GM12878 (cell line): ENCODE measurements at regions of chr1 and their contacts with region 1.

Region 1: GRCh38 chr1:116737020-116737854 is 17.0 kb upstream of the CD2 start:
- DNase-seq: peak; percentile 66
- ATAC-seq: peak; percentile 62
- H3K4me3 ChIP-seq: no peak overlapping the region
- H3K27ac ChIP-seq: peak overlapping the region; percentile 97
- H3K4me1 ChIP-seq: peaks cover 39% of the 10 kb centered on the region
- H3K27me3 ChIP-seq: no peaks in the 10 kb centered on the region
- CTCF ChIP-seq: peak; percentile 88 to 95 (median 93); a peak in 5 of 6 replicates
- EP300 ChIP-seq: no peak
- POLR2A ChIP-seq: peak; percentile 51; the same call in 1 of the 2 replicates
- RAD21 ChIP-seq: peak; percentile 95

Region 2: DNA sequence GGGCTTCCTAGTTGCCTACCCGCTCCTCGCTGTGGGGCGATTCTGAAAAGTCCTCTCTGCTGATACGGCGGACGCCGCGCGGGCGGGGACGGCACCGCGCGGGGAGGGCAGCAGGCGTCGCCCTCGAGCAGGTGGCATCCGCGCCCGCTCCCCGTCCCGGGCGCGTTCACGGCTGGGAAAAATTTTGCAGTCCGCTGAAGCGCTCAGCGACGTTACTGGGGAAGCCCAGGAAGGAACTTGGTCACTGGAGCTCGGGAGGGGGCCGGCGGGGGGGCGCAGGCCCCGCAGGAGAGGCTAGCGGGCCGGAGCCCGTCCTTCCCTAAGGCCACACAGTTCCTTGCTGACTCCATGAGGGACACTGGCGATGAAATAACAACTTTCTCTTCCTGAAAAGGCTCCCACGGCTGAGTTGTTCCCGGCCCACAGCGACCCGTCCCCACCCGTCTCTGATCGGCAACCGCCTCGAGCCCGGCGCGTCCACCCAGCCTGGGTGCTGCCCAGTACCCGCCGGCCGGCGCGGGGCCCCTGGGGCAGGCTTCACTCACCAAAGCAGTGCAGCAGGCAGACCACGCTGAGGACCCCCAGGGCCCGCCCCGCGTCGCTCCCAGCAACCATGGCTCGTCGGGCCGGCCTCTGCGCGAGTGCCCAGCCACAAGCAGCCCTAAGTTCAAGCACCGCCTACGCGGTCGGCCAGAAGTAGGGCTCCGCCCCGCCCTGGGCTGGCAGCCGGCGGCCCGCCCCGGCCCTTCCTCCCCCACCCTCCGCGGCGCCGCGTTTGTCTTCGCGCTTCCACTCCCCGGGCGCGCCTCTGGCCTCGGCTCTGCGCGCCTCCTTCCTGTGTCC is 166.7 kb before region 1 on chr1 and contains the start of gene CD58:
- CTCF ChIA-PET with region 1: interaction called, 18 read pairs
- POLR2A ChIA-PET with region 1: interaction called, 3 read pairs
- RAD21 ChIA-PET with region 1: interaction called, 19 read pairs
- SMC1A ChIA-PET with region 1: interaction called, 25 read pairs
- in situ Hi-C with region 1: no loop called
- intact Hi-C with region 1: loop called (anchors 1 kb)
- DNase-seq: no peak
- ATAC-seq: peak; percentile 76
- H3K4me3 ChIP-seq: peak within 1 kb of the TSS; percentile 97
- H3K27ac ChIP-seq: peak within 1 kb of the TSS; percentile 95
- H3K4me1 ChIP-seq: peaks cover 40% of the 10 kb centered on the region
- H3K27me3 ChIP-seq: no peaks in the 10 kb centered on the region
- CTCF ChIP-seq: peak; percentile 69 to 72 (median 70)
- EP300 ChIP-seq: 0 out of 4 replicates have a peak, but pooled peaks have one; percentile 12 to 27
- POLR2A ChIP-seq: peak; percentile 93
- RAD21 ChIP-seq: peak; percentile 32; the same call in 1 of the 2 replicates
- polyA plus RNA-seq, gene CD58: 110 to 125 TPM

Region 3: GRCh38 chr1:116763787-116764465 is 26.7 kb after region 1 on chr1:
- CTCF ChIA-PET with region 1: interaction called, 120 read pairs
- POLR2A ChIA-PET with region 1: interaction called, 45 read pairs
- RAD21 ChIA-PET with region 1: interaction called, 176 read pairs
- SMC1A ChIA-PET with region 1: interaction called, 224 read pairs
- in situ Hi-C with region 1: no loop called
- intact Hi-C with region 1: loop called (anchors 1 kb)
- DNase-seq: no peak
- ATAC-seq: peak; percentile 22
- H3K4me3 ChIP-seq: no peak overlapping the region
- H3K27ac ChIP-seq: no peak overlapping the region
- H3K4me1 ChIP-seq: peaks cover 10% of the 10 kb centered on the region
- H3K27me3 ChIP-seq: no peaks in the 10 kb centered on the region; a peak in 1 of 4 replicates
- CTCF ChIP-seq: peak; percentile 25 to 41 (median 36); a peak in 5 of 6 replicates
- EP300 ChIP-seq: no peak
- POLR2A ChIP-seq: no peak
- RAD21 ChIP-seq: peak; percentile 44

Region 4: GRCh38 chr1:116806245-116806644 is 69.0 kb after region 1 on chr1:
- CTCF ChIA-PET with region 1: interaction called, 11 read pairs
- POLR2A ChIA-PET with region 1: interaction called, 3 read pairs
- RAD21 ChIA-PET with region 1: interaction called, 4 read pairs
- SMC1A ChIA-PET with region 1: interaction called, 17 read pairs
- in situ Hi-C with region 1: no loop called
- intact Hi-C with region 1: no loop called
- DNase-seq: peak; percentile 76
- ATAC-seq: peak; percentile 81
- H3K4me3 ChIP-seq: no peak overlapping the region
- H3K27ac ChIP-seq: no peak overlapping the region
- H3K4me1 ChIP-seq: peaks cover 5% of the 10 kb centered on the region
- H3K27me3 ChIP-seq: no peaks in the 10 kb centered on the region
- CTCF ChIP-seq: no peak
- EP300 ChIP-seq: no peak
- POLR2A ChIP-seq: no peak
- RAD21 ChIP-seq: no peak

Region 5: GRCh38 chr1:116842654-116843053 is 105.4 kb after region 1 on chr1:
- CTCF ChIA-PET with region 1: interaction called, 19 read pairs
- POLR2A ChIA-PET with region 1: interaction called, 8 read pairs
- RAD21 ChIA-PET with region 1: interaction called, 29 read pairs
- SMC1A ChIA-PET with region 1: interaction called, 21 read pairs
- in situ Hi-C with region 1: no loop called
- intact Hi-C with region 1: no loop called
- DNase-seq: no peak
- ATAC-seq: no peak; the same call in 2 of the 3 replicates
- H3K4me3 ChIP-seq: no peak overlapping the region
- H3K27ac ChIP-seq: no peak overlapping the region
- H3K4me1 ChIP-seq: peaks cover 2% of the 10 kb centered on the region; the same call in 1 of the 2 replicates
- H3K27me3 ChIP-seq: no peaks in the 10 kb centered on the region
- CTCF ChIP-seq: no peak
- EP300 ChIP-seq: no peak
- POLR2A ChIP-seq: no peak
- RAD21 ChIP-seq: no peak

Region 6: GRCh38 chr1:116910379-116911187 is 173.3 kb after region 1 on chr1:
- CTCF ChIA-PET with region 1: interaction called, 17 read pairs
- POLR2A ChIA-PET with region 1: no interaction called
- RAD21 ChIA-PET with region 1: interaction called, 18 read pairs
- SMC1A ChIA-PET with region 1: interaction called, 6 read pairs
- in situ Hi-C with region 1: no loop called
- intact Hi-C with region 1: no loop called
- DNase-seq: no peak
- ATAC-seq: peak; percentile 59
- H3K4me3 ChIP-seq: no peak overlapping the region
- H3K27ac ChIP-seq: no peak overlapping the region
- H3K4me1 ChIP-seq: no peaks in the 10 kb centered on the region
- H3K27me3 ChIP-seq: peaks cover 0 to 13% of the 10 kb centered on the region in 2 experiments; a peak in 2 of 4 replicates
- CTCF ChIP-seq: no peak
- EP300 ChIP-seq: no peak
- POLR2A ChIP-seq: no peak
- RAD21 ChIP-seq: no peak

Region 7: DNA sequence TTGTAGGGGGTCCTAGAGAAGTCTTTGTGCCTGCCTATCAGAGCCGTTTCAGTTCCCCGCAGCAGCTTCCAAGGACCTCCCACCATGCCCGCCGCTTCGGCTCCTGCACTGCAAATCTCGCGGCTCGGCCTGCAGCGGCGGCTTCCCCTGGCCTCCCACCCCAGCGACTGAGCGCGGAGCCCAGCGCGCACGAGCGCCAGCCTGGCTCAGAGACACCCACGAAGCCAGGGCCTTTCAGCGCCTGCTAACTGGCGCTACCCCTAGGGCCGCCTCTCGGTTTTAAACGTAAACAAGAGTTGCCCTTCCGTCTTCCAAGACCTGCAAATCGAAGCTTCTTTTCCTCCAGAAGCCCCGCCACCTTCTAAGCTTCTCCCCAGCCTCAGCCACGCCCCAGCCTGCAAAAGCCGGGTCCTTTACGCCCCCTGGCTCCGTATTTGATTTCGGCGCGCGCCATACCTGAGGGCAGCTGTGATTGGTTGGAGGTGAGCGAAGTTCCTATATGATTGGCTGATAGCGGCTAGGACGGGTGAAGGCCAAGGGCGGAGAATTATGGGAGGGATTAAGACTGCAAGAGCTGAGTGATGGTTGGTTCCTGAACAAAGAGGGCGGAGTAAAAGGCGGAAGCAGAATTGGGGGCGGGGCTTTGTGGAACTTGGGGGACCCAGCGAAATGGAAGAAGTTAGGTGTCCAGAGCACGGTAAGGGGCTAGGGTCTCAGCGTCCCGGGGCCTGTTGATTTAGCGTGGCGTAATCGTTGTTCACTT is 322.6 kb after region 1 on chr1 and contains the start of gene TTF2:
- CTCF ChIA-PET with region 1: interaction called, 54 read pairs
- POLR2A ChIA-PET with region 1: interaction called, 24 read pairs
- RAD21 ChIA-PET with region 1: interaction called, 81 read pairs
- SMC1A ChIA-PET with region 1: interaction called, 91 read pairs
- in situ Hi-C with region 1: no loop called
- intact Hi-C with region 1: no loop called
- DNase-seq: peak; percentile 99
- ATAC-seq: peak; percentile 86
- H3K4me3 ChIP-seq: peak within 1 kb of the TSS; percentile 84
- H3K27ac ChIP-seq: peak within 1 kb of the TSS; percentile 90
- H3K4me1 ChIP-seq: peaks cover 4% of the 10 kb centered on the region
- H3K27me3 ChIP-seq: no peaks in the 10 kb centered on the region
- CTCF ChIP-seq: peak in 1 of 3 experiments; percentile 26; a peak in 1 of 6 replicates
- EP300 ChIP-seq: peak in 1 of 2 experiments; percentile 40; a peak in 1 of 4 replicates
- POLR2A ChIP-seq: peak; percentile 85
- RAD21 ChIP-seq: no peak
- polyA plus RNA-seq, gene TTF2: 17.7 to 20.8 TPM